ENCODE measurements at regions of chr17 and their contacts with region 1.

Region 1: DNA sequence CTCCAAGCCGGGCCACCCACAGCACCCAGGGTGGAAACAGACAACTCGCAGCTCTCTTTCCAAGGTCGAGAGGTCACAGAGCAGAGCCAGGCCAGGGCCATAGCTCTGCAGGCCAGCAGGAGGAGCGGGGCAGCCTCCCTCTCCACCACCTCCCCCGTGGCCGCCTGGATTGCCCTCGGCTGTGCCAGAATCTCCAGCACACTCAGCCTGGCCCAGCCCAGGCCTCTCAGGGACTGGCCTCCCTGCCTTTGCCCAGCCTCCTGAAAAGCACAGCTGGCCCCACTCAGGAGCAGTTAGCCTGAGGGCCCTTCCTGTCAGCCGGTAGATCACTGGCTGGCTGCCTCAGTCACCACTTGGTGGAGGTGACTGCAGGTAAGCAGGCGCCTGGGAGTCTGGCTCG is 85.8 kb upstream of the SEC14L1 start:
- DNase-seq: no peak
- H3K4me3 ChIP-seq: no peak overlapping the region
- H3K27ac ChIP-seq: no peak overlapping the region
- H3K27me3 ChIP-seq: peaks cover 42% of the 10 kb centered on the region
- CTCF ChIP-seq: no peak

Region 2: GRCh38 chr17:76816590-76817135 is 238.3 kb before region 1 on chr17:
- CTCF ChIA-PET with region 1: interaction called, 14 read pairs
- POLR2A ChIA-PET with region 1: no interaction called
- DNase-seq: peak; percentile 3
- H3K4me3 ChIP-seq: no peak overlapping the region
- H3K27ac ChIP-seq: no peak overlapping the region
- H3K27me3 ChIP-seq: peaks cover 5% of the 10 kb centered on the region
- CTCF ChIP-seq: peak; percentile 76

Region 3: DNA sequence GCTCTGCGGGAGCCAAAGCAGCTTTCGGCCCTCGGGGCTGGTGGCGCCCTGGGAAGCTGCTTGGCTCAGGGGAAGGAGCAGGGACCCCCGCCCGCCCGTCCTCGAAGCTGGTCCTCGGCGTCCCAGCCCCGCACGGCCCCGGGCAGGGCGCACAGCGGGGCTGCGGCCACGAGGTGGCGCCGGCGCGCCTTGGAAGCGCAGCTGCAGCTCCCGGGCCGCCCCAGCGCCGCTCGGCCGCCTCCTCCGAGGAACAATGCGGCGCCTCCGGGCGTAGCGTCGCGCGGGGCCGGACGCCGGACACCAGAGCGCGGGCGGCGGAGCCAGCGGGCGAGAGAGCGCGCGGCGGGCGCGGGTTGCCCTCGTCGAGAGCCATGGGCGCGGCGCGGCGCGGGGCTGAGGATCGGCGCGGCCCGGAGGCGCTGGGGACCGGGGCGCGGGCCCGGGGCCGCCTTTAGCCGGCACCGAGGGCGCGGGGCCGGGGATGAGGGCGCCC is 186.7 kb before region 1 on chr17 and contains the start of gene MGAT5B:
- CTCF ChIA-PET with region 1: interaction called, 87 read pairs
- POLR2A ChIA-PET with region 1: interaction called, 12 read pairs
- DNase-seq: peak; percentile 24
- H3K4me3 ChIP-seq: peak within 1 kb of the TSS; percentile 29
- H3K27ac ChIP-seq: peak within 1 kb of the TSS; percentile 40
- H3K27me3 ChIP-seq: peaks cover 11% of the 10 kb centered on the region
- CTCF ChIP-seq: peak; percentile 53
- polyA plus RNA-seq, gene MGAT5B: 0.69 and 0.81 TPM in 2 replicates

Region 4: DNA sequence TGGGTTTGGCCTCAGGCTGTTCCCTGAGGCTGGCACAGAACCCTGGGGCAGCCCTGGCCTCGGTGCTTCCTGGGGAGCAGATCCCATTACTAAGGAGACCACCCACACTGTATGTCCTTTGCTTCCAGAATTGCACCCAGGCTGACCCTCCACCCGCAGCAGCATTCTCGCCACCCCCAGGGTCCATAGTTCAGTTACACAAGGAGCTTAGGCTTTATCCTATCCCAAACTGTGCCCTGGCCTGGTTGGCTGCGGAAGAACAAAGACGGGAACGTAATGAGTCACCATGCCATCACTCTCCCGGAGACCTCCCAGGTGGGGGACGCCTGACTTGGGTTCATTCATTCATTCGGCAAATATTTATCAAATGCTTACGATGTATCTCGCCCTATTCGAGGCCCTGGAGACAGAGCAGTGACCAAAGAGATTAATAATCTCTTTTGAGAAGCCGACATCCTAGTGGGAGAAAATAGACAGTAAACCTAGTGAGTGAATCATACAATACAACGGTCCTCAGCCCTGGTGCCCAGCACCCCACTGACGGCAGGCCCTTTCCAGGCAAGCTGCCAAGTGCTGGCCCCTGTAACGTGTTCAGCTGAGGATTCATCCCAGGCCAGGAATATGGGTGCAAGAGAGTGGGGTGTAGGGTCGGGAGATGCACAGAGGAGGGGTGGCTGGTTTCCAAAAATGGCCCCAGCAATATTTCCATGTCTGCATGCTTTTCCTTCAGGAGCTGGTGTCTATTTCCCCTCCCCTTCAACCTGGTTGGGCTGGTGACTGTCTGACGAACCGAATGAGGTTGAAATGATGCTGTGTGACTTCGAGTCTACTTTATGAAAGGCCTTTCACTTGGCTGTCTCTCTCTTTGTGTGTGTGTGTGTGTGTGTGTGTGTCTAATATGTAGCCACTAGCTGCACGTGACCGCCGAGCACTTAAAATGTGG is 52.6 kb before region 1 on chr17:
- CTCF ChIA-PET with region 1: interaction called, 11 read pairs
- POLR2A ChIA-PET with region 1: no interaction called
- DNase-seq: peak; percentile 49
- H3K4me3 ChIP-seq: no peak overlapping the region
- H3K27ac ChIP-seq: peak overlapping the region; percentile 39
- H3K27me3 ChIP-seq: peaks cover 9% of the 10 kb centered on the region
- CTCF ChIP-seq: no peak

Region 5: GRCh38 chr17:77011173-77012011 is 43.5 kb before region 1 on chr17:
- CTCF ChIA-PET with region 1: interaction called, 14 read pairs
- POLR2A ChIA-PET with region 1: no interaction called
- DNase-seq: no peak
- H3K4me3 ChIP-seq: no peak overlapping the region
- H3K27ac ChIP-seq: no peak overlapping the region
- H3K27me3 ChIP-seq: peaks cover 6% of the 10 kb centered on the region
- CTCF ChIP-seq: peak; percentile 62

Region 6: GRCh38 chr17:77036807-77037381 is 18.0 kb before region 1 on chr17:
- CTCF ChIA-PET with region 1: interaction called, 16 read pairs
- POLR2A ChIA-PET with region 1: no interaction called
- DNase-seq: no peak
- H3K4me3 ChIP-seq: no peak overlapping the region
- H3K27ac ChIP-seq: no peak overlapping the region
- H3K27me3 ChIP-seq: peaks cover 42% of the 10 kb centered on the region
- CTCF ChIP-seq: no peak

Region 7: GRCh38 chr17:77068915-77069314 is 14.0 kb after region 1 on chr17:
- CTCF ChIA-PET with region 1: interaction called, 29 read pairs
- POLR2A ChIA-PET with region 1: interaction called, 4 read pairs
- DNase-seq: no peak
- H3K4me3 ChIP-seq: no peak overlapping the region
- H3K27ac ChIP-seq: no peak overlapping the region
- H3K27me3 ChIP-seq: peaks cover 38% of the 10 kb centered on the region
- CTCF ChIP-seq: no peak